ENCODE measurements at regions of chr1 and their contacts with region 1.

Region 1: DNA sequence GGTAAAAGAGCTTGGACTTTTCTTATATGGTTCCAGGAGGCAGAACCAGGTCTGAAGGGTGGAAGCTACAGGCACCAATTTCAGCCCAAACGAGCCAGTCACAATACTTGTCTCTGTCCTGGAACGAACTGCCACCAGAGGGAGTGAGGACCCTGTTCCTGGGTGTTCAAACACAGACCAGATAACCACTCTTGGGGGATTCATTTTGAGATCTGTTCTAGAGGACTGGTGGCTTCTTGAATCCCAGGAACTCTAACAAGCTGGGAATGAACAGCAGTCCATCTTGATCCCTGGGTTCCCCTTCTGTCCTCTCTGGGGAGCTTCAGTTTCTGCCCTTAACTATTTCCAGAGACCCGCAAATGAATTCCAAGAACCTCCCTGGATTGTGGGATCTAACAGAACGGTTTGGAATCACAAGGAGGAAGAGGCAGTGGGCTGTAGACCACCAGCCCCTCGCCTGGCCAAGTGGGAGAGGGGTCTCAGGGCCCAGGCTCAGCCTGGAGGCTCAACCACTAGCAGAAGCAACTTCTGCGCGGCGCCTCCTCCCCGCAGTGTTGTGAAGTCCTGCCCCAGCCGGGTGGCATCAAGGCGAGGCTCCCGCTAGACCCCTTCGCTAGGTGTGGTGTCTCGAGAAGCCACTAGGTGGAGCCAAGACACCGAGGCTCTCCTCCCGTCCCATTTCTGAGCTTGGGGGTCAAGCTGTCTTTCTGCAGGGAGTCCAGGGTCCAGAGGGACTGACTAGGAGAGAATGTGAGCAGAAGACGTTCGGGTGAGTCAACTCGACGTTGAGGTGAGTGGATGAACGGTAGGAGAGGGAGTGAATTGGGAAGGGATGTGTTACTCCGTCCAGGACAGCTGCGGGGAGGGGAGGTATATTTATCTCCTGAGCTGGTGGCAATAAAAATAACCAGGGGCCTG is 12.1 kb upstream of the NES start:
- DNase-seq: peak; percentile 56 to 82 (median 69)
- H3K4me3 ChIP-seq: peak overlapping the region in 44 of 59 donors; percentile 2 to 54 (median 26)
- H3K27ac ChIP-seq: no peak overlapping the region
- H3K27me3 ChIP-seq: peaks cover 0 to 35% (median 4%) of the 10 kb centered on the region in 45 donors
- CTCF ChIP-seq: peak; percentile 63 to 96 (median 92)

Region 2: DNA sequence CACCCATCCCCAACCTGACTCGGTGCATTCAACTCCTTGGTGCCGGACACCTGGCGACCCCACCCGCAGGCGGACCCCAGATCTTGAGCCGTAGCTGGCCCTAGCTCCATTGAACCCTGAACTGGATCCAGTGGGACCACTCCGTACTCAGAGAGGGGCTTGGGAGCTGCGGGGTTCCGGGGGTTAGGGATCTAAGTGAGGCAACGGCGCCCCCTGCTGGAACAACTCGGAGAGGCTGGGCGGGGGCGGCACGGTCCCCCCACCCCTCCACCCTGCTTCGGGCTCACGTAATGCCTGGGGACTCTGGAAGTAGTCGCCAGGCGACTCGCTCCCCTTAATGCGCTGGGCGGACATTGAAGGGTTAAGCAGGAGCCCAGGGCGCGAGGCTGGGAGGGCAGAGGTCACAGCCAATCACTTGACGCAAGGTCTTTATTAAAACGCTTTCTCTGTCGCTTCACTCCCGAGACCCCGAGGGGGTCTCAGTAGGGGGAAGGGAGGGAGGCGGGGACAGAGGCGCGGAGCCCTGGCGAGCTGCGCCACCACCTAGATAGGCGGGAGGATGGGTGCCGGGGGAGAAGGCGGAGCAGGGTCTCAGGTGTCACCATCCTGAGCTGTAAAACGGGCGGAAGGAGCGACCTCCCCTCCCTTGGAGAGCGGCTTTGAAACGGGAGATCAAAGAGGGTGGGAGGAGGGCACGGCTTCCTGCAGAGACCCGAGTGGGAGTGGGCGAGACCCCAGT is 16.8 kb after region 1 on chr1:
- intact Hi-C with region 1: loop called in 1 of 2 experiments (anchors 2 kb)
- DNase-seq: peak in 9 of 10 donors; percentile 36 to 76 (median 64)
- H3K4me3 ChIP-seq: peak overlapping the region; percentile 31 to 74 (median 59)
- H3K27ac ChIP-seq: peak overlapping the region in 54 of 59 donors; percentile 51 to 90 (median 75)
- H3K27me3 ChIP-seq: peaks cover 0 to 17% (median 0%) of the 10 kb centered on the region in 45 donors
- CTCF ChIP-seq: peak; percentile 48 to 89 (median 78)

Measured in dorsolateral prefrontal cortex (tissue), 120 donors.